Activated CD4-positive, alpha-beta T cell treated with anti-CD3 and anti-CD28 coated beads for 36 hours (primary cell): ENCODE measurements at regions of chr5 and their contacts with region 1.

Region 1: DNA sequence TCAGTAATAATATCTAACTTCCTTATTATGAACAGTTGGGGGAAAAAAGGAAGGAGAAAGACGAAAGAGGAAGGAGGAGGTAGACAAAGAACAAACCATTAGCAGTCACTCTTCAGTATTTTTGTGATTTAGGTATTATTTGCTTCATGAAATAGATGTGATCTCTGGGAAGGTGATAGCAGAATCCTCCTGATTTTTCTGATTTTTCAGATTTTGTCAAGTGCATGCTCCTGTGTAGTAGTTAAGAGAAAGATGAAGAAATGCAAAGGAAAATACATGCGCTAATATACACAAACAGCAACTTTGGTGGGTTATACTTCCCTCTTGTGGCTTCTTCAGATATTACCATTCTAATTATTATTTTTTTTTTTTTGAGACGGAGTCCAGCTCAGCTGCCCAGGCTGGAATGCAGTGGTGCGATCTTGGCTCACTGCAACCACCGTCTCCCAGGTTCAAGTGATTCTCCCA is 31.6 kb downstream of the LMNB1 start:
- DNase-seq: no peak
- ATAC-seq: no peak
- H3K4me3 Mint-ChIP-seq: no peak overlapping the region
- H3K27ac Mint-ChIP-seq: no peak overlapping the region
- H3K4me1 Mint-ChIP-seq: peaks cover 51% of the 10 kb centered on the region
- H3K27me3 Mint-ChIP-seq: no peaks in the 10 kb centered on the region

Region 2: GRCh38 chr5:126403876-126404275 is 404.7 kb before region 1 on chr5:
- CTCF ChIA-PET with region 1: no interaction called
- POLR2A ChIA-PET with region 1: no interaction called
- intact Hi-C with region 1: no loop called
- DNase-seq: no peak
- ATAC-seq: no peak
- H3K4me3 Mint-ChIP-seq: no peak overlapping the region
- H3K27ac Mint-ChIP-seq: no peak overlapping the region
- H3K4me1 Mint-ChIP-seq: no peaks in the 10 kb centered on the region
- H3K27me3 Mint-ChIP-seq: peaks cover 2% of the 10 kb centered on the region

Region 3: GRCh38 chr5:126745259-126745992 is 63.1 kb before region 1 on chr5:
- CTCF ChIA-PET with region 1: interaction called, 4 read pairs
- POLR2A ChIA-PET with region 1: interaction called, 5 read pairs
- intact Hi-C with region 1: loop called in 1 of 2 experiments (anchors 2 kb)
- DNase-seq: no peak
- ATAC-seq: no peak
- H3K4me3 Mint-ChIP-seq: no peak overlapping the region
- H3K27ac Mint-ChIP-seq: no peak overlapping the region
- H3K4me1 Mint-ChIP-seq: peaks cover 34% of the 10 kb centered on the region
- H3K27me3 Mint-ChIP-seq: peaks cover 3% of the 10 kb centered on the region

Region 4: DNA sequence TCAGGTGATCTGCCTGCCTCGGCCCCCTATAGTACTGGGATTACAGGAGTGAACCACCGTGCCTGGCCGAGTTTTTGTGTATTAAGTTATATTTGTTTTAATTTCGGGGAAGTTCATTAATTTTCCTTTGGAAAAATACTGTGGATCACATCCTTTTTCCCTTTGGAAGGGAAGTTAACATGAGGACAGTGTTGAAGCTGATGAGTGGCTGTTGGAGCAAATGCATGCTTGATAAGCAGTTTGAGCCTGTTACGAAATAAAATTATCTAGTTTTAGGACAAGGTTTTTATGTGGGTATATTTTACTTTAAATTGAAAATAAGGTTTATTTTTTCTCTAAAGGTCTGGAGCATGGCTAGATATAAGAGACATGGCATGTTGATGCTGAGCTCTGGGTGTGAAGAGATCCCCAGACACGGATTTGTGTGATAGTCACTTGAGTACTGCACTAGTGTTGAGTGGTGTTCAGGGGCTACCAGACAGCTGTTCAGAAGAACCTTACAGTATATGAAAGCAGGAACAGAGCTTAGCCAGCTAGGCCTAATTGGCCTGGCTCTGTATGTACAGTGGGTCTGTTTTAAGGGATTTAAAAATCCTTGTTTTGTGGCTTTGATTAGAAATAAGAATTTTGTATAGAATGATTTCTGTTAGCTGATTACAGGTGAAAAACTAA is 14.3 kb before region 1 on chr5:
- CTCF ChIA-PET with region 1: interaction called, 16 read pairs
- POLR2A ChIA-PET with region 1: no interaction called
- intact Hi-C with region 1: no loop called
- DNase-seq: no peak
- ATAC-seq: no peak
- H3K4me3 Mint-ChIP-seq: no peak overlapping the region
- H3K27ac Mint-ChIP-seq: no peak overlapping the region
- H3K4me1 Mint-ChIP-seq: peaks cover 40% of the 10 kb centered on the region
- H3K27me3 Mint-ChIP-seq: no peaks in the 10 kb centered on the region

Region 5: DNA sequence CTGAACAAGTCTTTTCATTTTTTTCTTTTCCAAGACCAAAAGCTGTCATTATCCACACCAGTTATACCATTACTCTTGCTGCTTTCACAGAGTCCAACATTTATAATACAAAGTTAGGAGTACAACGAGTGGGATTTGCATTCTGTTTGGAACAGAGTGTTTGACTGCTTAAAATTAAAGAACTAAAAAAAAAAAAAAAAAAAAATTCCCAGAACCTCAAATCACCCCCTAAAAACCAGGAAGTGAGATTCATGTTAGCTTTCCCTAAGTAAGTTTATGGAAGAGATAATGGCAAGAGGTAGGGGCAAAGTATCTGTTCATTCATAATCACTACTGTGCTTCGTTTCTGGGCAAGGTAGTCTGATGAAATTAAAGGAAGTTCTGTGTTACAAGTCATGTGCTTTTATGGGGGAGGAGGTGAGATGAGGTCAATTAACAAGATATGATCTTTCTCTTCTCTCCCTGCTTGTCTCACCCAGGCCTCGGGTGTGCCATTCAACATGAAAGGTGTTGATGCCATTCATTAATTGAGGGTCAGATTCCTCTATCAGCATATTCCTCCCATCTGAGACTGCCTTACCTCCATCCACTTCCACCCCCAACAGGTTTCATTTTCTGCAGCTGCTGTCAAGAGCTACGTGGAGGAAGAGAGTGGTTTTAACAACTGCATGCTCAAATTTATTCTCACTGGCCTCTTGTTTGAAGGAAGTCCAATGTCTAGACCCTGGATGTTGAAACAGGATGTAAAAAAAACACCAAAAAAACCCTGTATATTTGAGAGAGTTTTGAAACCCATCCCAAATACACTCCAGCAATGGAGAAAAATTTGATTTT is 163.7 kb after region 1 on chr5:
- CTCF ChIA-PET with region 1: no interaction called
- POLR2A ChIA-PET with region 1: no interaction called
- intact Hi-C with region 1: no loop called
- DNase-seq: peak; percentile 40
- ATAC-seq: peak; percentile 85
- H3K4me3 Mint-ChIP-seq: peak overlapping the region; percentile 46
- H3K27ac Mint-ChIP-seq: peak overlapping the region; percentile 94
- H3K4me1 Mint-ChIP-seq: peaks cover 28% of the 10 kb centered on the region
- H3K27me3 Mint-ChIP-seq: no peaks in the 10 kb centered on the region